Sciatic nerve (tissue), 2 donors: ENCODE measurements at regions of chr9 and their contacts with region 1.

Region 1: DNA sequence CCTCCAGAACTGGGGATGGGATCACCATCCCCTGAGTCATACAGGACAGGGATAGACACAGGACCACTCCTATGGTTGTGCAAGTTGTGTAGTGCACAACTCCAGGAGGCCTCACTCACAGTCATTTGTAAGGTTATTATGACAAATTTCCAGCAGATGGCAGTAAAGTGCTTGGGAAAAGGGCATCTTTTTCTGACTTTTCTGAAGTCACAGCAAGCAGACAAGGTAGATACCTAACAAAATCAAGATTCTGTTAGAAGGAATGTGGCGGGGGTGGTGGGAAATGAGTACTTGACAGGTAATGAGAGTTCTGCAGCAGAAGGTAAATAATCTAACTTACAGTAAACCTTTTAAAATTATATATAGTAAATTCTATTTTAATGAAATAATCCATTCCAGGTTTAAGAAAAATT is 16.7 kb upstream of the KIF27 start:
- DNase-seq: no peak
- ATAC-seq: peak; percentile 44

Region 2: GRCh38 chr9:84261082-84261746 is 323.3 kb after region 1 on chr9:
- intact Hi-C with region 1: loop called (anchors 2 kb)
- DNase-seq: peak; percentile 90
- ATAC-seq: peak; percentile 96